Naive thymus-derived CD4-positive, alpha-beta T cell (primary cell): ENCODE measurements at regions of chr11 and their contacts with region 1.

Region 1: DNA sequence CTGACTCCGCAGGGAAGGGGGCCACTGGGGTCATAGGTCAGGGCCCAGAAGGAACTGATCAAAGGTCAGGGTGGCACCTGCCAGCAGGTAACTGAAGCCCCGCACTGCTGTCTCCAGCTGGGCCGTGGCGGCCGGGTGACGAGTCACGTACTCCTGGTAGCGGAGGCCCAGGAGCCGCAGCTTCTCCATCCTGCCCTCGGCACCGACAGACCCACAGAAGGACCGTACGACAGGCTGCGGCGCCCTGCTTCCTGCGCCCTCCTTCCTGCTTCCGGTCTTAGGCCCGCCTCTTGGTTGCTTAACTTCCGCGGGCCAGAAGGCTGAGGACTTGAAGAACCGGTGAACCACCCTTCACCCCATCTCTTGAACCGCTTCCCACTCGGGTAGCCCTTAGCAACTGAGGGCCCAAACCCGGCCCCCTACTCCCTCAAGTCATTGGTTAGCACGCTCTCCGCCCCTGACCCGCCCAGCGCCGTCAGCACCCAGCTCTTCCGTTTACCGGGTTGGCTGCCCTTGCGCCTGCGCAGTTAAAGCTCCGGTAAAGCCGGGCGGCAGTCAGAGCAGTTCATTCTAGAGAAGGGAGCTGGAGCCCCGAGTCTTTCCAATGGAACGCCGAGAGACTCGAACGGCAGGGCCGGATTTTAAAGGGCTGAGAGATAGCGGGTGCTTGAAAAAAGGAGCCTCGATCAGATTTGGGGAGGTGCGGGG is at the start of gene PEX16:
- DNase-seq: peak; percentile 86 to 98 (median 97)
- ATAC-seq: peak; percentile 95
- H3K4me3 ChIP-seq: peak within 1 kb of the TSS; percentile 72
- H3K4me3 Mint-ChIP-seq: peak within 1 kb of the TSS; percentile 86 to 98 (median 96)
- H3K27ac ChIP-seq: peak within 1 kb of the TSS; percentile 87
- H3K27ac Mint-ChIP-seq: peak within 1 kb of the TSS; percentile 91 to 100 (median 98)
- H3K4me1 ChIP-seq: peaks cover 24 to 36% of the 10 kb centered on the region in 2 donors
- H3K4me1 Mint-ChIP-seq: peaks cover 31 to 66% (median 49%) of the 10 kb centered on the region in 7 donors
- H3K27me3 ChIP-seq: no peaks in the 10 kb centered on the region
- H3K27me3 Mint-ChIP-seq: peaks cover 0 to 13% (median 4%) of the 10 kb centered on the region in 5 donors
- total RNA-seq, gene PEX16: 48.2 to 64.3 (median 58.1) TPM

Region 2: DNA sequence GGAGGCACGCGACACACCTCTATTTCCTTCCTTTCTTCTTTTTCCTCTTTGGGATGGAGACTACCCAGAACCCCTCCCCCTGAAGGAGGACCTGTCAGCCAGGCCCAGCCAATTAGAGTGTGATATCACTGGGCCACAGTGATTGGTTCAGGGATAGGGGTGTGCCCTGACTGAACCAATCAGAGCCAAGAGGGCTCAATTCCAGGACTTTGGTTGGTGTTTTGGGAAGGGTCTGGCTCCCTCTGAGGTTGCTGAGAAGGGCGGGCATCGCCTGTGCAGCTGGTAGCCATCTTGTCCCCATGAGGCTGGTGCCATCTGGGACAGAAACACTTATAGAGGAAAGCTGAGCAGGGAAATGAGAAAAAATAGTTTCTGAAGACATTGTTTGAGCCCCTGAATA is 323.8 kb before region 1 on chr11:
- CTCF ChIA-PET with region 1: no interaction called
- POLR2A ChIA-PET with region 1: no interaction called
- intact Hi-C with region 1: no loop called
- DNase-seq: no peak
- ATAC-seq: no peak
- H3K4me3 ChIP-seq: no peak overlapping the region
- H3K4me3 Mint-ChIP-seq: no peak overlapping the region
- H3K27ac ChIP-seq: no peak overlapping the region
- H3K27ac Mint-ChIP-seq: no peak overlapping the region
- H3K4me1 ChIP-seq: no peaks in the 10 kb centered on the region
- H3K4me1 Mint-ChIP-seq: no peaks in the 10 kb centered on the region
- H3K27me3 ChIP-seq: no peaks in the 10 kb centered on the region
- H3K27me3 Mint-ChIP-seq: peaks cover 3 to 25% (median 8%) of the 10 kb centered on the region in 5 donors

Region 3: GRCh38 chr11:45885274-45885920 is 32.4 kb before region 1 on chr11 and contains the start of gene MAPK8IP1:
- CTCF ChIA-PET with region 1: no interaction called
- POLR2A ChIA-PET with region 1: no interaction called
- intact Hi-C with region 1: loop called (anchors 1 kb)
- DNase-seq: peak; percentile 15 to 71 (median 50)
- ATAC-seq: peak; percentile 90
- H3K4me3 ChIP-seq: peak within 1 kb of the TSS; percentile 51
- H3K4me3 Mint-ChIP-seq: peak within 1 kb of the TSS; percentile 64 to 85 (median 73)
- H3K27ac ChIP-seq: no peak within 1 kb of the TSS
- H3K27ac Mint-ChIP-seq: peak within 1 kb of the TSS in 2 of 9 donors; percentile 40 to 69
- H3K4me1 ChIP-seq: no peaks in the 10 kb centered on the region
- H3K4me1 Mint-ChIP-seq: peaks cover 7 to 15% (median 10%) of the 10 kb centered on the region in 7 donors
- H3K27me3 ChIP-seq: no peaks in the 10 kb centered on the region
- H3K27me3 Mint-ChIP-seq: peaks cover 0 to 21% (median 4%) of the 10 kb centered on the region in 5 donors
- total RNA-seq, gene MAPK8IP1: 0.65 to 7.0 (median 0.92) TPM

Region 4: GRCh38 chr11:45930031-45930794 is 12.4 kb after region 1 on chr11:
- CTCF ChIA-PET with region 1: interaction called, 3 read pairs
- POLR2A ChIA-PET with region 1: interaction called, 26 read pairs
- intact Hi-C with region 1: loop called in 1 of 2 experiments (anchors 1 kb)
- DNase-seq: peak in 4 of 9 donors; percentile 17 to 33 (median 23)
- ATAC-seq: peak; percentile 82
- H3K4me3 ChIP-seq: peak overlapping the region; percentile 33
- H3K4me3 Mint-ChIP-seq: peak overlapping the region; percentile 25 to 89 (median 74)
- H3K27ac ChIP-seq: peak overlapping the region; percentile 47
- H3K27ac Mint-ChIP-seq: peak overlapping the region; percentile 72 to 96 (median 91)
- H3K4me1 ChIP-seq: peaks cover 27 to 32% of the 10 kb centered on the region in 2 donors
- H3K4me1 Mint-ChIP-seq: peaks cover 20 to 40% (median 24%) of the 10 kb centered on the region in 7 donors
- H3K27me3 ChIP-seq: no peaks in the 10 kb centered on the region
- H3K27me3 Mint-ChIP-seq: no peaks in the 10 kb centered on the region

Region 5: GRCh38 chr11:46593550-46594373 is 676.0 kb after region 1 on chr11 and contains the start of gene AMBRA1:
- CTCF ChIA-PET with region 1: no interaction called
- POLR2A ChIA-PET with region 1: no interaction called
- intact Hi-C with region 1: loop called in 1 of 2 experiments (anchors 1 kb)
- DNase-seq: peak; percentile 59 to 83 (median 80)
- ATAC-seq: peak; percentile 97
- H3K4me3 ChIP-seq: peak within 1 kb of the TSS; percentile 69
- H3K4me3 Mint-ChIP-seq: peak within 1 kb of the TSS; percentile 90 to 100 (median 97)
- H3K27ac ChIP-seq: peak within 1 kb of the TSS; percentile 84
- H3K27ac Mint-ChIP-seq: peak within 1 kb of the TSS; percentile 92 to 98 (median 96)
- H3K4me1 ChIP-seq: peaks cover 19 to 22% of the 10 kb centered on the region in 2 donors
- H3K4me1 Mint-ChIP-seq: peaks cover 23 to 49% (median 41%) of the 10 kb centered on the region in 7 donors
- H3K27me3 ChIP-seq: no peaks in the 10 kb centered on the region
- H3K27me3 Mint-ChIP-seq: no peaks in the 10 kb centered on the region
- total RNA-seq, gene AMBRA1: 38.1 to 48.7 (median 44.6) TPM